GM10248 (cell line): ENCODE measurements at regions of chr9 and their contacts with region 1.

Region 1: DNA sequence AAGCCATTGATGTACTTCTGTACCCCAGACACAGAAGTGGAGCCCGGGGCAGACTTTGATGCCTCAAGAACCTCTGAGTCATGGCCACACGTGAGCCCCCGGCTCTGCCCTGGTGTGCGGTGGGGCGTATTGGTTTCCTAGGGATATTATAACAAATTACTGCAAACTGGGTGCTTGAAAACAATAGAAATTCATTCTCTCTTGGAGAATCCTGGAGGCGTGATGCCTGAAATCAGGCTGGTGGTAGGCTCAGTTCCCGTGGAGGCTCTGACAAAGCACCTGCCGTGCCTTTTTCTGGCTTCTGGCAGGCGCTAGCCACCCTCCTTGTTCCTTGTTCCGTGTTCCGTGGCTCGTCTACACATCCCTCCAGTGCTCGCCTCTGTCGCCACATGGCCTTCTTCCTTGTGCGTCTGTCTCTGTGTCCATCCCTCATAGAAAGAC is 24.2 kb downstream of the NEK6 start:
- DNase-seq: no peak
- CTCF ChIP-seq: no peak

Region 2: GRCh38 chr9:124267271-124267807 is 14.6 kb before region 1 on chr9:
- CTCF ChIA-PET with region 1: interaction called, 3 read pairs
- POLR2A ChIA-PET with region 1: interaction called, 10 read pairs
- DNase-seq: no peak
- CTCF ChIP-seq: no peak